ENCODE measurements at regions of chr2 and their contacts with region 1.

Region 1: GRCh38 chr2:167718560-167718959 is 528.8 kb downstream of the STK39 start:
- DNase-seq: no peak
- H3K4me3 ChIP-seq: no peak overlapping the region
- H3K27ac ChIP-seq: no peak overlapping the region
- H3K4me1 ChIP-seq: no peaks in the 10 kb centered on the region
- H3K27me3 ChIP-seq: no peaks in the 10 kb centered on the region
- CTCF ChIP-seq: no peak

Region 2: DNA sequence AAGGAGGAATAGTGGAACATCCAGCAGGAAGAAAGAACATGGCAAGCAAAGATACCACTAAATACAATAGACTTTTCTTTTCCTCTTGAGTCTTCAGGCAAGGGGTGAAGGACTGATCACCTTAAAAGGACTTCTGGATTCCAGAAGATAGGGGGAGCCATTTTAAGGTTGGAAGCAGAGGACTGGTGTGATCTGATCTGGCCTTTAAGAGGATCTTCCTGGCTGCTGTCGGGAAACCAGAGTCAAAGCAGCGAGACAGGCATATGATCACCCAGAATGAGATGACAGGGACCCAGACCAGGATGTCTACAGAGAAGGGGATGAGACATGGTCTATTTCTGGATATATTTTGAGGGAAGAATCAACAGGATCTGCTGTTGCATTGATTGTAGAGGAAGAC is 29.1 kb before region 1 on chr2:
- intact Hi-C with region 1: loop called (anchors 2 kb)
- DNase-seq: no peak
- H3K4me3 ChIP-seq: no peak overlapping the region
- H3K27ac ChIP-seq: no peak overlapping the region
- H3K4me1 ChIP-seq: no peaks in the 10 kb centered on the region
- H3K27me3 ChIP-seq: no peaks in the 10 kb centered on the region
- CTCF ChIP-seq: no peak

Region 3: DNA sequence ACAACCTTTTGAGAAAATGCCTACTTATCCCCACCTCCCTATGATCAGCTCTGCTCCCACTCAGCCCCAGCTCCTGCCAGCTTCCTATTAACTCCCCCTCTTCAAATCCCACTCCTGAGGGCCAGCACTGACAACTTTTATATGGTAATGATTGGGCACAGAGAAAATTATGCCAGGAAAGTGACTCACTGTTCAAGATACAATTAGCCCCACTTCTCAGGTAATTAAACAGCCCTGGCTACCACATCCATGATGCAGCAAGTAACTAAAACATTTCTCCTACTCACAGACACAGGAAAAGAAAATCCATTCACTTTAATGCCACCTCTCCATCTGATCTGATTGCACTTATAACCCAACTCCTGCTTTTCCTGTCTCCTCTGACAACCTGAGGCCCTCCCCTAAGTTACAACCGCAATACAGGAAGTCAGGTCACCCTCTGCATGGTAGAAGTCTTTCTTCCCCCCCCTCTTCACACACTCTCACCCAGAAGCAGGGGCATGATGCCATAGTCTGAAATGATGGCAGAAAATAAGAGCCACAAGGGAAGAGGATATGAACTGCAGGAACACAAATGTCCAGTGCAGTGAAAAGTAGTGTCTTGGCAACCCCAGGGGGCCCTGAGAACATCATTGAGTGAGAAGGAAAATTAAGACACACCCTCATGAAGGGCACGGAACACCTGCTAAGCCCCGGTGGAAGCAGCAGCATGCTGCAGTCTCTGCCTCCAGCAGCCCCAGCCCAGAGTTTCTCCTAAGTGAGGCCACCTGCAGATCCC is 474.5 kb after region 1 on chr2:
- intact Hi-C with region 1: no loop called
- DNase-seq: no peak
- H3K4me3 ChIP-seq: no peak overlapping the region
- H3K27ac ChIP-seq: no peak overlapping the region
- H3K4me1 ChIP-seq: peaks cover 0 to 15% (median 0%) of the 10 kb centered on the region in 4 donors
- H3K27me3 ChIP-seq: no peaks in the 10 kb centered on the region
- CTCF ChIP-seq: no peak

Measured in tibial artery (tissue), 4 donors.